ENCODE measurements at regions of chr2 and their contacts with region 1.

Region 1: DNA sequence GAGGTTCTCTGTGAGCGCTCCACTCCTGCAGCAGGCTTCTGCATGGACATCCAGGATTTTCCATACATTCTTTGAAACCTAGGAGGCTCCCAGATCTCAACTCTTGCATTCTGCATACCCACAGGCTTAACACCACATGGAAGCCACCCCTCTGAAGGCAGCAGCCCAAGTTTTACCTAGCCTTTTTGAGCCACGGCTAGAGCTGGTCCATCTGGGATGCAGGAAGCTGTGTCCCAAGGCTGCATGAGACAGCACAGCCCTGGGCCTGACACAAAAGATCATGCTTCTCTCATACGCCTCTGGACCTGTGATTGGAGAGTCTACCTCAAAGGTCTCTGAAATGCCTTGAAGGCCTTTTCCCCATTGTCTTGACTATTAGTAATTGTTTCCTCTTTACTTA is 53.6 kb upstream of the RPRM start:
- DNase-seq: no peak
- H3K4me3 ChIP-seq: no peak overlapping the region
- H3K27ac ChIP-seq: no peak overlapping the region
- H3K4me1 ChIP-seq: no peaks in the 10 kb centered on the region
- H3K27me3 ChIP-seq: no peaks in the 10 kb centered on the region
- CTCF ChIP-seq: no peak
- EP300 ChIP-seq: no peak
- POLR2A ChIP-seq: no peak

Region 2: DNA sequence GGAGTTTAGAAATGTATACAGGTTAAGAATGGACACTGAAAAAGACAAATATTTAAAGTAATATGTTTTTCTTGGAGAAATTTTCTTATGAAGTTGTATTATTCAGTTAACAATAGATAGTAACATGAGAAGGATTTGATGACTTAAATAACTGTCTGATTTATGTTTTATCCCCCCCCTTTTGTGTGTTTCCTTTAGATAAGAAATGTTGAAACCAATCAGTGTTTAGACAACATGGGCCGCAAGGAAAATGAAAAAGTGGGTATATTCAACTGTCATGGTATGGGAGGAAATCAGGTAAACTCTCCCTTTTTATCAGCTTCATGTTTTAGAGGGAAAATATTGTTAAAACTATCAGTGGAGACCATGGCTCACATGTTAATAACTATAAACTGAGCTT is 876.6 kb after region 1 on chr2:
- intact Hi-C with region 1: loop called in 1 of 4 experiments (anchors 5 kb)
- DNase-seq: no peak
- H3K4me3 ChIP-seq: no peak overlapping the region
- H3K27ac ChIP-seq: no peak overlapping the region
- H3K4me1 ChIP-seq: no peaks in the 10 kb centered on the region
- H3K27me3 ChIP-seq: no peaks in the 10 kb centered on the region
- CTCF ChIP-seq: no peak
- EP300 ChIP-seq: no peak
- POLR2A ChIP-seq: no peak

Measured in ovary (tissue), 10 donors.